ENCODE measurements at regions of chr10 and their contacts with region 1.

Region 1: DNA sequence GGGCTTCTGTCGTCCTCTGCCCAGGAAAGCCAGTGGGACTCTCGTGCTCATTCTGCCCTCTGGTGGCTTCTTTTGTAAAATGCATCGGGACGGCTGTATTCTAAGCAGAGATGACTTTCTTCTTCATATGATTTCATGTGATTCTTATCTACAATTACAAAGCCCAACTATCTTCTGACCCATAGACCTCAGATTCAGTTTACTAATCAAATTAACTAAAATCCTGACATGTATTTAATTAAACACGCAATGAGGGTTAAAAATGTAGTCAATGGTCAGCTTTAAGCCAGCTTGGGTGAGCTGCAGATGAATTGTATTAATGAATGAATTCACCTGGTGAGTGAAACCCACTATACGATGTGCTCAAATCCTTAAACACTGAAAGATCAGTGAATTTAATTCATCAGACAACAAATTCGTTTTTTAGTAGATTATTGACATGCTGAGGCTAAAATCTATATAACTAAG is 117.6 kb upstream of the FAM204A start:
- DNase-seq: no peak

Region 2: DNA sequence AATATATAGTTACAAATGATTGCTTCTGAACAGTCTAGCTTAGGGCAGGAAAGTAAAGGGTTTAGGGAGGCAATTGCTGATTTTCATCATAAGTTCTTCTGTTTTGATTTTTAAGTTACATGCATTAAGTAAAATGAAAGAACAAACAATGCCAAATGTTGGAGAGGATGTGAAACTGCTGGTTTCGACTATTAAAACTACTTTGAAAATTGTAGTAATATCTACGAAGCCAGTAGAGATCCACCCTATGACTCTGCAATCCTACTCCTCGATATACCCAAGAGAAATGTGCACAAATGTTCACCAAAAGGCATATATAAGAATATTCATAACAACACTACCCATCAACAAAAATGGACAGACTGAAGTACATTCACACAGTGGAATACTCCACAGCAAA is 1108.9 kb before region 1 on chr10:
- intact Hi-C with region 1: loop called in 1 of 2 experiments (anchors 5 kb)
- DNase-seq: no peak

Region 3: DNA sequence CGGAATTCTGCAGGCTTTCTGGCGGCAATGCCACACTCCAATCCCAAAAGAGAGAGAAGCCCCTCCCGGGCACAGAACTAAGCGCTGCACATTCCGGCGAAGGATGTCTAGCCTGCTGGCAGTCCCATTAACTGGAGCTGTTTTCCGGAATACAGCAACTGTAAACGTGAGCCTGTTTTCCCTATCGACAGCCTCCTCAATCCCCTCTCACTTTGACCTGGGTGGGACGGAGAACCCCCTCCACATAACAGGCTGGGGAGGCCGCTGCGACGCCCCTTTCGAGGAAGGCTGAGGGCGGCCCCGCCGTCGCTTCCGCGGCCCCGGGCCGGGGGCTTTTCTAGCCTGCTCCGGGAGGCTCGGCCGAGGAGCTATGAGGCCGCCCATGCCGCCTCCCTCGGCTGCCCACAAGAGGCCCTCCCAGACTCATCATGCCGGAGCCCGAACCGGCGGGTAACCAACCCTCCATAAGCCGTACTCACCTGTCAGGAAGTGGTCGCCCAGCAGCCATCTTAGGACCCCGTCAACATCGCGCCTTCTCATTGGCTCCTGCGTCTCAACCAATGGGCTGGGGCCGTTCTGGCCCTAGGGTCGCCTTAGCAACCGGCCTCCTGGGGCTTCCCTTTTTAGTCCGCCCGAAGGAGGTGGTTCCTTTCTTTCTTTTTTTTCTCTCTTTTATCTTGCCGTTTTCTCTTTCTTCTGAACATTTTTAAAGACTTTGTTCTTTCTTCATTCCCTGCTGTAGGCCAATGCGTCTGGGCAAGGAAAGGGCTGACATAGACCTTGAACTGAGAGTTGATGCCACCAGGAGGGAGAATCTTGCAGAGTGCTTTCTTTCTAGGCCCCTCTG is 117.7 kb before region 1 on chr10 and contains the start of gene FAM204A:
- intact Hi-C with region 1: no loop called
- DNase-seq: peak; percentile 98
- total RNA-seq, gene FAM204A: 73.6 to 82.6 TPM

Region 4: DNA sequence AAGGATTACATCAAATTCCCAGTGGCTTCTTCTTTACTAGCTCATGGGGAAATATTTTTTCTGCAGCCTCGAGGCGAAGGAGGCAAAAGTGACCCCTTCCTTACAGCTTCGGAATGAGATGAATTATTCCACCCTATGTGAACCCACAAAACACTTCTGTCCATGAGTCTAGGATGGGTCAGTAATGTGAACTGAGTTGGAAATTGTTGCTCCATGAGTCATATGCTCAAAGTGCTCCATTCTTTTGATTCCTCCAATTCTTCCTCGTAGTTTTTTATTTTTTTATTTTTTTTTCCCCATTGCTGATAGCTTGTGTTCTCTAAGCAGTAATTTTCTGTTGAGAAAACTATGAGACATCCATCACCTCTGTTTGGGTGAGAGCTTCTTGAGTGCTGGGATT is 86.0 kb before region 1 on chr10:
- intact Hi-C with region 1: no loop called
- DNase-seq: no peak

Region 5: DNA sequence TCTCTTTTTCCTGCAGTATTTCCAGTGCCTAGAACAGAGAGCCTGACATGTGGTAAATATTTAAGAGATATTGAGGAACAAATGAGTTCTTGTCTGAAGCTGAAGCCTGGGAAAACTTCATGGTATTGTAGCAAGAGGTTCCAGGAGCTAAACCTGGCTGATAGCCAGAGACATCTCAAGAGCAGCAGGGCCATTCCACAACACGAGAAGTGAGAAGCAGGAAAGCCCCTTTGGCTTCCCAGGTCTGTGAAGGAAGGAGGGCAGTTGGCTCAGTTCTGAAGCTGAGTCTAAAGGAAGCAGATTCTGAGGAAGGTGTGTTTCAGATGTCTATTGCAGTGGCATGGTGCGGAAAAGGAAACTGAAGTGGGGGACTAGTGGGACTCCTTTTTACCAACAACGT is 53.8 kb before region 1 on chr10:
- intact Hi-C with region 1: no loop called
- DNase-seq: no peak

Region 6: DNA sequence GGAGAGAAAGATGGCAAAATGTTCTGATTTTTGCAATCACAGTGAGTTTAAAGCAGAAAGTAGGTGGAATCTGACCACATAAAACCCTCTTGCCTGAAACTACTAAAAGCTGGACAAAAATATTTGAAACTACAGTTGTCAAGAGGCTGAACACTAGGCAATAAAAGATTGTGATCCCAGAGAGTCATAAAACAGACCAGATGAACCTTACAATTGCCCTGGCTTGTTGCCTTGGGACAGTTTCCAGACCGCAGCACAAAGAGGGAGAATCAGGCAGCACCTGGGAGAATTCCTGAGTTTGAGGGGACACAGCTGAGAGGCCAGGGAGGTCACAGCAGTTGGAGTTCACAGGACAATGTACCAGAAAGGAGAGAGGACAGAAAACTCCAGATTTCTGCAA is 462.5 kb after region 1 on chr10:
- intact Hi-C with region 1: no loop called
- DNase-seq: no peak

Measured in posterior vena cava (tissue), 2 donors.